OCI-LY7 (cell line): ENCODE measurements at regions of chr17 and their contacts with region 1.

Region 1: GRCh38 chr17:63741221-63742049 is at the start of gene STRADA:
- DNase-seq: peak; percentile 99
- H3K4me3 ChIP-seq: peak within 1 kb of the TSS; percentile 98
- H3K27ac ChIP-seq: peak within 1 kb of the TSS; percentile 98
- H3K4me1 ChIP-seq: peaks cover 61% of the 10 kb centered on the region
- CTCF ChIP-seq: no peak
- total RNA-seq, gene STRADA: 31.9 and 37.2 TPM in 2 replicates

Region 2: DNA sequence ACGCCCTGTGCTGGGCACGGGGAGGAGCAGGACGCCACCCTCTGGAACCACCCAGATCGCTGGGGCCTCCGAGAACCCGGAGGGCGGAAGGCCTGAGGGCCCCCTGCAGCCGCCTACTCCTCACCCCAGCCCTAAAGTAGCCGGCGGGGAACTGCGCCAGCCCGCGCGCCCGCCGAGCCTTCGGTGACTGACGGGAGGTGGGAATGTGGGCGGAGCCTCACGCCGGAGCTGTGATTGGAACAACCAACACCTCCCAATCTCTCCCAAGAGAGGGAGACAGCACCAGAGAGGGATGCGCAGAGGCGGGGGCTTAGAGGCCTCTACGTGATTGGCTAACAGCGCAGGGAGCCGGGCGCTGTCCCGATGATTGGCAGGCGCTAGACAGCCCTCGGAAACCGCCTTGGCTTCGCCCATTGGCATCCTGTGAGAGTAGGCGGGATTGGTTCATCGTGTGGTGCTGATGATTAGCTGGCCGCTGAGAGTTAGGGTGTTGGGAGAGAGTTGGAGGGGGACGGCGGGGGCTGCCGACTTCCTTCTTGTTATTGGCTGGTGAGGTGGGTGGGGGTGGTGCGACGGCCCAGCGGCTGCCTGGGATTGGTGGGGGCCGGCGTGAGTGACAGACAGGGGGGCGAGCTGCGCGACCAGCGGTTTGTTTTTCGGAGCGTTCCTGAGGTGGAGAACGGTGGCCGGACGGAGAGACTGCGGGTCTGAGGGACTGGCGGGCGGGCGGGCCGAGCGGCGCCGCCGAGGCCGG is 119.5 kb before region 1 on chr17 and contains the start of gene MAP3K3:
- CTCF ChIA-PET with region 1: no interaction called
- POLR2A ChIA-PET with region 1: interaction called, 4 read pairs
- intact Hi-C with region 1: loop called (anchors 5 kb)
- DNase-seq: peak; percentile 100
- H3K4me3 ChIP-seq: peak within 1 kb of the TSS; percentile 75
- H3K27ac ChIP-seq: peak within 1 kb of the TSS; percentile 43
- H3K4me1 ChIP-seq: peaks cover 26% of the 10 kb centered on the region
- CTCF ChIP-seq: peak; percentile 52; the same call in 1 of the 2 replicates
- total RNA-seq, gene MAP3K3: 16.5 and 26.0 TPM in 2 replicates

Region 3: GRCh38 chr17:63773381-63774140 is 32.1 kb after region 1 on chr17 and contains the start of gene CCDC47:
- CTCF ChIA-PET with region 1: no interaction called
- POLR2A ChIA-PET with region 1: interaction called, 11 read pairs
- intact Hi-C with region 1: loop called (anchors 1 kb)
- DNase-seq: peak; percentile 99
- H3K4me3 ChIP-seq: peak within 1 kb of the TSS; percentile 90
- H3K27ac ChIP-seq: peak within 1 kb of the TSS; percentile 93
- H3K4me1 ChIP-seq: peaks cover 31% of the 10 kb centered on the region
- CTCF ChIP-seq: no peak
- total RNA-seq, gene CCDC47: 27.5 and 37.6 TPM in 2 replicates

Region 4: GRCh38 chr17:63827002-63827771 is 85.8 kb after region 1 on chr17 and contains the starts of genes FTSJ3 and PSMC5:
- CTCF ChIA-PET with region 1: no interaction called
- POLR2A ChIA-PET with region 1: no interaction called
- intact Hi-C with region 1: loop called (anchors 5 kb)
- DNase-seq: peak; percentile 97
- H3K4me3 ChIP-seq: peak within 1 kb of the TSS; percentile 78
- H3K27ac ChIP-seq: peak within 1 kb of the TSS; percentile 67
- H3K4me1 ChIP-seq: peaks cover 23% of the 10 kb centered on the region
- CTCF ChIP-seq: peak; percentile 78
- total RNA-seq, gene FTSJ3: 32.4 and 43.0 TPM in 2 replicates
- total RNA-seq, gene PSMC5: 32.6 and 42.7 TPM in 2 replicates

Region 5: DNA sequence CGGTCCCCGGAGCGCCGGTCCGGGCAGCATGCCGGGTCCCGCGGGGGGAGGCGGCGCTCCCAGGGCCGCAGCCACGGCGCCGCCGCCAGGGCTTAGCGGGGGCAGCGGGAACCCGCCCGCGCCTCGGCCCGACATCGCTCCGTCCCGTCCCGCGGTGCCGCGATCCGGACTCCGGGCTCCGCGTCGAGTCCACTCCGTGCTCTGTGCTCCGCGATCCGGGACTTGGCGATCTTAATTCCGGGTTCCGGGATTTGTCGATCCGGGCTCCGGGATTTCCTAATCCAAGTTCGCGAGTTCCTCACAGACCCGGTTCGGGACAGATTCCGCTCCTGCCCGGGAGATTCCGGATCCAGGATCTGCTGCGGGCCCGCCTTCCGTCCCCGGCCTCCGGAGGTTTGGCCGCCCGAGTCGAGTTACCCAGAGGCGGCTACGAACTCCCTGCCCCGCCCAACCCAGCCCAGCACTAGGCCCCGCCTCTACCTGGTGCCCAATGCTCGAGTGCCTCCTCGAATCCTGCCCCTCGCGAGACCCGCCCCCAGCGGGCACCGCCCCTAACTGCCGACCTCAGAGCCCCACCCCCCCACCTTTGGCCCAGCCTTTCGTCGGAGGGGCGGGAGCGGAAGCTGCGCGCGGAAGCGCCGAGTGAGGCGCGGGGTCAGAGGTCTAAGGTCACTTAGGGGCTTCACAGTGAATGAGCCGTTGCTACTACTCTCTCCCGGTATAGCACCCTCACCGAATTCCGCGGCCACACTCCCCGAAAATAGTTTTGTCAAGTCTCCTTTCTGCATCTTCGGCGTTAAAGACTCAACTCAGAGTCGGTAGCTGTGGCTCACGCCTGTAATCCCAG is 101.3 kb after region 1 on chr17 and contains the start of gene SMARCD2:
- CTCF ChIA-PET with region 1: no interaction called
- POLR2A ChIA-PET with region 1: interaction called, 5 read pairs
- intact Hi-C with region 1: loop called (anchors 1 kb)
- DNase-seq: peak; percentile 98
- H3K4me3 ChIP-seq: peak within 1 kb of the TSS; percentile 99
- H3K27ac ChIP-seq: peak within 1 kb of the TSS; percentile 97
- H3K4me1 ChIP-seq: peaks cover 48% of the 10 kb centered on the region
- CTCF ChIP-seq: no peak
- total RNA-seq, gene SMARCD2: 112 and 120 TPM in 2 replicates

Region 6: DNA sequence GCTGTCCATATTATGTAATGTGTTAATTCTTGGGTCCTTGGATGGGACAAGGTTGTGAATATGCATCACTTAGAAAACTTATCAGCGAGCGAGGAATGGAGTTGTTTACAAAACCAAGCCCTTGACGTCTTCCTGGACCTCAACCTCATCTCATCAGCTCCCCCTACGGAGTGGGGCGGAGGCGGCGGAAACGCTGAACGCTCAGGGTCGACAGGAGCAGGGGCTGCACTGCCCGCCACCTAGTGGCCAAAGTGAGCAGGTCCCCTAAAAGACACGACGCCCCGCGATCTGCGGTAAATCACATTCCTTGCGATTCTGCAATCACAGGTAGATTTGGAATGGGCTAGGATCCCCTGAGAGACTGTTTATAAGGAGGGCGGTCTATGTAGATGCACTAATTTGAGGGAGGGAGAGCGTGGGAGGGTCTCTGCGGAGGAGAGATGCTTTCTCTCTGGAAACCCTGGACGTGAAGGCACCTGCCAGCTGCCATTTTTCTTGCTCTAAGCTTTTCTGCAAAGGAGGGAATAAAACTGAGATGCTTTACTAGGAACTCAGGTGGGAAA is 284.4 kb after region 1 on chr17:
- CTCF ChIA-PET with region 1: no interaction called
- POLR2A ChIA-PET with region 1: no interaction called
- intact Hi-C with region 1: no loop called
- DNase-seq: peak; percentile 91
- H3K4me3 ChIP-seq: peak overlapping the region; percentile 20
- H3K27ac ChIP-seq: peak overlapping the region; percentile 20
- H3K4me1 ChIP-seq: peaks cover 73% of the 10 kb centered on the region
- CTCF ChIP-seq: peak; percentile 98

Region 7: GRCh38 chr17:64145757-64146417 is 404.5 kb after region 1 on chr17:
- CTCF ChIA-PET with region 1: no interaction called
- POLR2A ChIA-PET with region 1: no interaction called
- intact Hi-C with region 1: loop called (anchors 10 kb)
- DNase-seq: peak; percentile 100
- H3K4me3 ChIP-seq: peak overlapping the region; percentile 84
- H3K27ac ChIP-seq: peak overlapping the region; percentile 93
- H3K4me1 ChIP-seq: peaks cover 30% of the 10 kb centered on the region
- CTCF ChIP-seq: peak; percentile 24; the same call in 1 of the 2 replicates

Region 8: GRCh38 chr17:65638221-65638975 is 1897.0 kb after region 1 on chr17:
- CTCF ChIA-PET with region 1: interaction called, 16 read pairs
- POLR2A ChIA-PET with region 1: no interaction called
- intact Hi-C with region 1: no loop called
- DNase-seq: no peak
- H3K4me3 ChIP-seq: no peak overlapping the region
- H3K27ac ChIP-seq: no peak overlapping the region
- H3K4me1 ChIP-seq: no peaks in the 10 kb centered on the region
- CTCF ChIP-seq: no peak